A673 (cell line): ENCODE measurements at regions of chr1 and their contacts with region 1.

Region 1: DNA sequence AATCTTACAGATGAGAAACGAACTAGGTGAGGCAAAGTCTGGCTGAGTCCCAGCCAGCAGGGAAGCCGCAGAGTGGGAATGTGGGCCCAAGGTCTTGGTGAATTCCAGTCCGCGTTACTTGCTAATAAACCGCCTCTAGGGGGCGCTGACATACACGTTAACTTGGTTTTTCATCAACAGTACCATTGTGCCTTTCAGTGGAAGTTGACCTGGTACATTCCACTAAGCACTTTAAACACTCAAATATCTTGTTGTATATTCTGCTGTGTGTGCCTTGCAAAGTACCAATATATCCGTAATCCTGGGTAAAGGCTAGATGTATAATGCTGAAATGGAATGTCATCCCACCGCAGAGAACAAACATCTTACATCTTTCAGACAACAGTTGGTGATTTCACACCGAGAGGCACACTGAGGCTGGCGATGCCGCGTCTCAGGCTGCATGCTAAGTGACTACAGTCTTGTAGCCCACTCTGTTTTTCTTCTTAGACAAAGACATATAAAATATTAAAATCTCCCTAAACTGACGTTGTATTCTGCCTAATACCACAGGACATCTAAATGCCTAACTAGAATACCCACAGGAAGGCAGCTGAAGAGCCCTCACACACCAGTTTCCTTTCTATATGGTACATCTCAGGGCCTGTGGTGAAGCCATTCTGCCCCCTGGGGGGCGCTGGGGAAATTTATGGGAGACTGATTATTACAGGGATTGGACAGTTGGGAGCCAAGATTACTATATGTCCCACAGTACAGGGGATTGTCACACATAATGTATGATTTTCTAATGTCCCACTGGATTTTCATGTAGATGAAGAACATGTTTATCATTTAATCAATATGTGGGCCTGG is 49.2 kb upstream of the C1orf198 start:
- DNase-seq: peak; percentile 86
- H3K4me3 ChIP-seq: no peak overlapping the region
- H3K27ac ChIP-seq: no peak overlapping the region
- H3K4me1 ChIP-seq: peaks cover 10% of the 10 kb centered on the region
- H3K27me3 ChIP-seq: no peaks in the 10 kb centered on the region
- CTCF ChIP-seq: peak; percentile 84

Region 2: DNA sequence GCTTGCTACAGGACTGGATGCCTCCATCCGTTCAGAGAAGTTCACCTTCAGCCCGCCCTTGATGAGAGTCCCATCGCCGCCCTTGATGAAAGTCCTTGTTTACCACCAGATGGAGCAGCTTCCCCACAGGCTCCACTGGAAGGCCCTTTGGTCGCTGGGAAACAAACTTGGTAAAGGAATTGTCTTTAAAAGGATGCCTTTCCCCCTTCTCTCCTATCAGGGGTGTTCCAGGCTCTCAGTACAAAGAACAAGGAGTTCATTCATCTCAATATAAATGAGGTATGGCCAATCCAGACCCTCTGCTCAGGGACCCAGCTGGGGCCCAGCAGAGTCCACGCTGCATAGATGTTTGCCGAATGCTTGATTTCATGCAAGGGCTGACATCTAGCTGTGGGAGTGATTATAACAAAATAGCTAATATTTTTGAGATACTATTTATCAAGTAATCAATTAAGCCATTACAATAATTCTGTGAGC is 119.5 kb before region 1 on chr1:
- CTCF ChIA-PET with region 1: no interaction called
- POLR2A ChIA-PET with region 1: no interaction called
- intact Hi-C with region 1: loop called (anchors 2 kb)
- DNase-seq: peak; percentile 66
- H3K4me3 ChIP-seq: no peak overlapping the region
- H3K27ac ChIP-seq: no peak overlapping the region
- H3K4me1 ChIP-seq: no peaks in the 10 kb centered on the region
- H3K27me3 ChIP-seq: no peaks in the 10 kb centered on the region
- CTCF ChIP-seq: peak; percentile 70

Region 3: GRCh38 chr1:231702801-231703395 is 785.4 kb after region 1 on chr1:
- CTCF ChIA-PET with region 1: no interaction called
- POLR2A ChIA-PET with region 1: no interaction called
- intact Hi-C with region 1: no loop called
- DNase-seq: no peak
- H3K4me3 ChIP-seq: no peak overlapping the region
- H3K27ac ChIP-seq: no peak overlapping the region
- H3K4me1 ChIP-seq: no peaks in the 10 kb centered on the region
- H3K27me3 ChIP-seq: no peaks in the 10 kb centered on the region
- CTCF ChIP-seq: no peak